PC-3 (cell line): ENCODE measurements at regions of chr11 and their contacts with region 1.

Region 1: DNA sequence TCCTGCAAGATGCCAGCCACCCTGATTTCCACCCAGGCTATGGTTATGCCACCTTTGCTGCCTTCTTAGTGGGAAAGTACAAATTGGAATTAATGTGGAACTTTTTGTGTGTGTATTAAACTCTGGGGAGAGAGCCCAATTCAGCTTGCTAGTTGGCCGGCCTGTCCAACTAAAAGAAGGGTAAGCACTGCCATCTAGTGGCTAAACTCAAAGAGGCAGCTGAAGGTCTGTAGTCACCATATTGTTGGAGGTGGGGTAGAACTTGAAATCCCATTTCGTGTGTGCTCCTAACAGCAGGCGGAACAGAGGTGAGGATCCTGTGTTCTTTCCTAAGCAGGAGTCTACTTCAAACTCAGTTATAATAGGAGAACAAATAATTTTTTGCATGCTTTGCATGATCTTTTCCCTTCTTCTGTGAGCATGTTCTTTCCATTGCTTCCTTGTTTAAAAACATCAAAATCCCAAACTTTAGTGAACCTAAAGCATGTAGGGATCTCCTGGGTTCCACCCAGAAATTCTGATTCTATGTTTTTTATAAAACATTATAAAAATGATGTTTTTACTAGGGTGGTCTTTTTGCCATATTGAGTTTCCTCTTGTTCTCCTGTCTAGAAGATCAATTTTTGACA is 138.8 kb upstream of the SORL1-AS1 start:
- DNase-seq: peak; percentile 95
- ATAC-seq: peak; percentile 35
- H3K4me3 ChIP-seq: no peak overlapping the region
- H3K27ac ChIP-seq: no peak overlapping the region
- H3K4me1 ChIP-seq: peaks cover 35% of the 10 kb centered on the region
- H3K27me3 ChIP-seq: no peaks in the 10 kb centered on the region
- CTCF ChIP-seq: peak; percentile 94

Region 2: DNA sequence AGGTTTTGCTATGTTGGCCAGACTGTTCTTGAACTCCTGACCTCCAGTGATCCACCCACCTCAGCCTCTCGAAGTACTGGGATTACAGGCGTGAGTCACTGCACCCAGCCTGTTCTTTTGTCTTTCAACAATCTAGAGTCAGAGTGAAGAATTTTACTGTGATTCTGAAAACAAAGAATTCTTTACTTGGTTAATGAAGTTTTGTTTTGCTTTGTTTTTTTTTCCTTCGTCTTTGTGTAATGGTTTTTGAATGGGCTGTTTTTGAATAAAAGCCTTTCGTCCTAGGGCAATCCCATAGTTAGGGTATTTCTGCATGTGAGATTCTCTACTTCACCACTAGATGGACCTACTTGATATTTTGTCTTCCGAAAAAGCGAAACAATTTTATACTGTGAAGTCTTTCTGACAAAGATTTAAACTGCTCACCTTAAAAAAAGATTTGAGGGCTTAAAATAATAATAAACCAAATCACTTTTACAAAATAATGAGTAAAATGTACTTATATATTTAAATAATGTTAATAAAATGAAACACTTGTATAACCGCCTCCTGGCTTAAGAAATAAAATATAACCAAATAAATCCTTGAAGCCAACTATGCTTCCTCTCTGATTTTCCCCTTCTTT is 342.4 kb before region 1 on chr11:
- CTCF ChIA-PET with region 1: no interaction called
- POLR2A ChIA-PET with region 1: no interaction called
- intact Hi-C with region 1: loop called (anchors 2 kb)
- DNase-seq: peak; percentile 72
- ATAC-seq: peak; percentile 69
- H3K4me3 ChIP-seq: no peak overlapping the region
- H3K27ac ChIP-seq: no peak overlapping the region
- H3K4me1 ChIP-seq: peaks cover 45% of the 10 kb centered on the region
- H3K27me3 ChIP-seq: no peaks in the 10 kb centered on the region
- CTCF ChIP-seq: peak; percentile 86

Region 3: DNA sequence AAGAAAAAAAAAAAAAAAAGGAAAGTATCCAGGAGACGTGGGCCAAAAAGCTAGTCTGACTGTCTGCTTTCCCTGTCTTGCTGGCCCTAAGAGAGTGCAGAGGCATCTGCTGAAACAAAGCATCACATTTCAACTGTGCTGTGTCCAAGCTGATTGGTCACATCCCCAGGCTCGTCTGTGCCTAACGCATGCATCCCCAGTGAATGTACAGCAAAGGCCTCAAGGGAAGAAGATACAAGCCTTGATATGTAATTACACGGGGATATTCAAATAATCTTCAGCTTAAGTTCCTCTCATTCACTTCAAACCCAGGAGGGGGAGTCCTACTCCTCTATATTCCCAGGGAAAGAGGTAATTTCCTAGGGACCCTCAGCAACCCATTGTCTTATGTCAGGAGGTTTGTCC is 144.8 kb before region 1 on chr11:
- CTCF ChIA-PET with region 1: interaction called, 3 read pairs
- POLR2A ChIA-PET with region 1: no interaction called
- intact Hi-C with region 1: loop called (anchors 1 kb)
- DNase-seq: peak; percentile 41
- ATAC-seq: no peak
- H3K4me3 ChIP-seq: no peak overlapping the region
- H3K27ac ChIP-seq: no peak overlapping the region
- H3K4me1 ChIP-seq: peaks cover 14% of the 10 kb centered on the region
- H3K27me3 ChIP-seq: no peaks in the 10 kb centered on the region
- CTCF ChIP-seq: peak; percentile 65

Region 4: GRCh38 chr11:121464352-121464946 is 127.1 kb before region 1 on chr11:
- CTCF ChIA-PET with region 1: interaction called, 4 read pairs
- POLR2A ChIA-PET with region 1: no interaction called
- intact Hi-C with region 1: loop called (anchors 5 kb)
- DNase-seq: peak; percentile 97
- ATAC-seq: peak; percentile 70
- H3K4me3 ChIP-seq: peak overlapping the region; percentile 43
- H3K27ac ChIP-seq: peak overlapping the region; percentile 93
- H3K4me1 ChIP-seq: peaks cover 76% of the 10 kb centered on the region
- H3K27me3 ChIP-seq: no peaks in the 10 kb centered on the region
- CTCF ChIP-seq: no peak

Region 5: DNA sequence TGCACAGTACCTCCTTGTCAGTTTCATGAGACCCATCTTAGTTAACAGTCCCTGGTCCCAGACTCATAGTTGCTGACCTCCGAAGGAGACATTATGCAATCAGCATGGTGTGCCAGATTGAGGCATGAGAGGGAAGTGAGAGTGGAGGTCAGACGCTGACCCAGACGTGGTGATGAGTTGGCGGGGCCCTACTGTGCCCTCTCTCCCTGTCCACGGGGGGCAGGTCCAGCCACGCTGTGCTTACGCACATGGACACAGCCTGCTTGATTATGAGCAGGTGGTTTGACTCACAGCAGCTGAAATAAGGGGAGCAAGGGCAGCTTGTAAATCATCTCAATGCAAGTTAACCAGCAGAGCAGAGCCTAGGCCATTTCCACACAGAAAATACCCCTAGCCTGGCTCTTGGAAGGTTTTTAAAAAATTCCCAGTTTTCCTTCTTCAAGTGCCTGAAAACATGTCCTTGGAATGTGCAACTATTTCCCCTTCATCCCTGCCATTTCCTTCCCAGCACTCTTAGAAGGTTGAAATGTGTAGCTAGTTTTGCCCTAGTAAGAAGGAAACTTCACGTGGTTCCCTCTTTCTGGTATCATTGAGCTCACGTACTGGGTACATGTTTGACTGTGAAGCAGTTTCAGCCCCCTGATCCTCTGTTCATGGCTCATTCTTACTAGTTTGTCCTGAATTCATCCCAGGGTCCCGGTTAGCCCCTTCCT is 16.1 kb before region 1 on chr11:
- CTCF ChIA-PET with region 1: no interaction called
- POLR2A ChIA-PET with region 1: no interaction called
- intact Hi-C with region 1: no loop called
- DNase-seq: no peak
- ATAC-seq: no peak
- H3K4me3 ChIP-seq: no peak overlapping the region
- H3K27ac ChIP-seq: no peak overlapping the region
- H3K4me1 ChIP-seq: no peaks in the 10 kb centered on the region
- H3K27me3 ChIP-seq: no peaks in the 10 kb centered on the region
- CTCF ChIP-seq: no peak

Region 6: GRCh38 chr11:121634889-121635288 is 43.4 kb after region 1 on chr11:
- CTCF ChIA-PET with region 1: no interaction called
- POLR2A ChIA-PET with region 1: no interaction called
- intact Hi-C with region 1: loop called (anchors 5 kb)
- DNase-seq: peak; percentile 97
- ATAC-seq: peak; percentile 92
- H3K4me3 ChIP-seq: peak overlapping the region; percentile 22; the same call in 1 of the 2 replicates
- H3K27ac ChIP-seq: peak overlapping the region; percentile 77
- H3K4me1 ChIP-seq: peaks cover 39% of the 10 kb centered on the region
- H3K27me3 ChIP-seq: no peaks in the 10 kb centered on the region
- CTCF ChIP-seq: no peak

Region 7: GRCh38 chr11:121733858-121734257 is 142.3 kb after region 1 on chr11:
- CTCF ChIA-PET with region 1: no interaction called
- POLR2A ChIA-PET with region 1: no interaction called
- intact Hi-C with region 1: no loop called
- DNase-seq: no peak
- ATAC-seq: no peak
- H3K4me3 ChIP-seq: no peak overlapping the region
- H3K27ac ChIP-seq: no peak overlapping the region
- H3K4me1 ChIP-seq: no peaks in the 10 kb centered on the region
- H3K27me3 ChIP-seq: no peaks in the 10 kb centered on the region
- CTCF ChIP-seq: no peak